Activated T-helper 1 cell treated with anti-CD3 and anti-CD28 coated beads, Interleukin-12 subunit alpha, Interleukin-12 subunit beta, Interleukin-2, Interleukin-4 antibody, amounts not matched to agents 30 ng/mL and 10 ng/mL and 1 ng/mL, durations not matched to agents 14 hours and 24 hours and 36 hours (primary cell): ENCODE measurements at regions of chr1 and their contacts with region 1.

Region 1: DNA sequence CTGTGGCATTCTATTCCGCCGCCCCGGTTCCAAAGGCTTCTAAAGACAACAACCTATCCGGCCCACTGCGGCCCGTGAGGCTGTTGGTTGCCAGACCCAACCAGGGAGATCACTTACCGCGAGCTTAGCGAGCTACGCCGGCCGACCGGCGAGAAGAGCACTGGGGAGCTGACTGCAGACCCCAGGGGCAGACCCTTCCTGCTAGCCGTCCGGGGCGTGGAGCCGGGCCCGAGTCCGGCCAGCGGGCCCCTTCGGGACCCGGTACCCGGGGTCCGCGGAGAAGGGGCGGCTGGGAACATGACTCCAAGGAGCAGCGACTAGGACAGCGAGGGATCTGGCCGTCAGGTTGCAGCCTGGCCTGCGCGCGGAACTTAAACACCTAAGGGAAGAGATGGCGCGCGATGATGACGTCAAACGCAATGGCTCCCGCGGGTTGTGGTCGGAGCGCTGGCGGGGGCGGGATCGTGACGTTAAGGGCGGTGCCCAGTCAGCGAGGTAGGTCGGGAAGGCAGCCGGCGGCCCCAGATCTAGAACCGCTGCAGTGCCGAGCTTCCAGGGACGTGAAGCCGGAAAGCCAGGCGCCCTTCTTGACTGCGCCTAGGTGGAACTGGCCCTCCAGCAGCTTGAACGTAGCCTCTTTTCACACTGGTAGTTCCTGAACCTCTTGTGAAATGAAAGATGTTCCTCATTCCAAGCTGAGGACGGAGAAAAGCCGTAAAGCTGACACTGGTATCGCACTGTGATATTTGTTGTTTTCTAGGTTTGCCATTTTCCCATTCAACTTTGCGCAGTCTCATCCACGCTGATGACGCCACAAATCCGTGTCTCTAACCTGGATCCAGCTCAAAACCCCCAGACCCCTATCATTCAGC is at the start of gene NUP133:
- DNase-seq: peak; percentile 97
- H3K4me3 Mint-ChIP-seq: peak within 1 kb of the TSS; percentile 96
- H3K27ac Mint-ChIP-seq: peak within 1 kb of the TSS; percentile 97
- H3K4me1 Mint-ChIP-seq: peaks cover 25% of the 10 kb centered on the region
- H3K27me3 Mint-ChIP-seq: peaks cover 4% of the 10 kb centered on the region
- total RNA-seq, gene NUP133: 47.9 and 49.1 TPM in 2 replicates

Region 2: DNA sequence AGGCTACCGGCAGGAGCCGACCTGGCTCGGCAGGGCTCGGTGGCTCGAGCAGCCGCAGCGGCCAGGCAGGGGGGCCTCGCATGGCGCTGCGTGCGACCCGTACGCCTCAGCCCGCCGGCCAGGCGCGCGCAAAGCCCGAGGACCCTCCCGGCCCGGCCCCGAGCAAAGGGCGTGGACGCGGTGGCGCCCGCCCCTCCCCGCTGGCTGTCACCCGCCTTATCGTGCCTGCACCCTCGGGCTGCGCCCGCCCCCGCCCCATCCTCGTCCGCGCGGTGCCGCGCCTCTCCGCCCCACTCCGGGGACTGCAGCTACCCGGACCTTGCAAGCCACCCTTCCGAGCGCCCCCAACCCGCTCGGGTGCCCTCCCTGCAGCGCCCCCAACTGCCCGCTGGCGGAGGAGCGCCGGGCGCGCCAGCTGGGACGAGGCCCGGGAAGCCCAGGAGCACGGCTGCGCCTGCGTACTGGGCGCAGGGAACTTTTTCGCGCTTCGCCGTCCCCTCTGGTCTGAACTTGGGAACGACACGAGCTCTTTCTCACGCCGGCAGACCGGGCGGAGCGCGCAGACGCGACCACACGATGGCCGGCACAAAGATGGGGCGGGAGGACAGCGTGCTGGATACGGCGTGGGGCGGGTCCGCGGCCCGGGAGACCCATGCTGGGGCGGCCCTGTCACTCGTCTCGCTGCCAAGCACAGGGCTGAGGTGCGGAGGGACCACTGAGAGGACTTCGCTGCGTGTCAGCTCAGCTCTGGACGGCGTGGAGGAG is 50.6 kb after region 1 on chr1 and contains the start of gene ABCB10:
- intact Hi-C with region 1: loop called (anchors 1 kb)
- DNase-seq: peak; percentile 81
- H3K4me3 Mint-ChIP-seq: peak within 1 kb of the TSS; percentile 90
- H3K27ac Mint-ChIP-seq: peak within 1 kb of the TSS; percentile 83
- H3K4me1 Mint-ChIP-seq: peaks cover 49% of the 10 kb centered on the region
- H3K27me3 Mint-ChIP-seq: no peaks in the 10 kb centered on the region
- total RNA-seq, gene ABCB10: 46.2 and 47.0 TPM in 2 replicates